ENCODE measurements at regions of chr2 and their contacts with region 1.

Region 1: GRCh38 chr2:84713441-84713840 is 167.4 kb downstream of the TRABD2A start:
- DNase-seq: no peak
- ATAC-seq: no peak
- H3K4me3 ChIP-seq: no peak overlapping the region
- H3K27ac ChIP-seq: no peak overlapping the region
- H3K4me1 ChIP-seq: no peaks in the 10 kb centered on the region
- H3K27me3 ChIP-seq: no peaks in the 10 kb centered on the region; the same call in 1 of the 2 replicates
- CTCF ChIP-seq: no peak

Region 2: DNA sequence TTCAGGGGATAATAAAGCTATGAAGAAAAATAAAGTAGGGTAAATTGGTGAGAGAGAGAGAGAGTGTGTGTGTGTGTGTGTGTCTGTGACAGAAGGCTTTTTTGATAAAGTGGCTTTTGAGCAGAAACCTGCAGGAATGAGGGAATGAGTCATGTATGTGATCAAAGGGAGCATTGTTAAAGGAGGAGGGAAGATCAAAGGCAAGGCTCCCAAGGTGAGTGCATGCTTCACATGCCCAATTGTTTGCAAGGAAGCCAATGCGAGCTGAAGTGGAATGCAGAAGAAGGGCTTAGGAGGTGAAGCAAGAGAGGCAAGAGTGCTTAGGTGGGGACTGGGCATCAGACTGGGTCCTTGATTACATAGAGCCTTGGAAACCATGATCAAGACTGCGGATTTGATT is 100.4 kb before region 1 on chr2:
- CTCF ChIA-PET with region 1: no interaction called
- POLR2A ChIA-PET with region 1: no interaction called
- in situ Hi-C with region 1: no loop called
- intact Hi-C with region 1: no loop called
- DNase-seq: no peak
- ATAC-seq: no peak
- H3K4me3 ChIP-seq: no peak overlapping the region
- H3K27ac ChIP-seq: no peak overlapping the region
- H3K4me1 ChIP-seq: no peaks in the 10 kb centered on the region
- H3K27me3 ChIP-seq: no peaks in the 10 kb centered on the region
- CTCF ChIP-seq: no peak

Region 3: DNA sequence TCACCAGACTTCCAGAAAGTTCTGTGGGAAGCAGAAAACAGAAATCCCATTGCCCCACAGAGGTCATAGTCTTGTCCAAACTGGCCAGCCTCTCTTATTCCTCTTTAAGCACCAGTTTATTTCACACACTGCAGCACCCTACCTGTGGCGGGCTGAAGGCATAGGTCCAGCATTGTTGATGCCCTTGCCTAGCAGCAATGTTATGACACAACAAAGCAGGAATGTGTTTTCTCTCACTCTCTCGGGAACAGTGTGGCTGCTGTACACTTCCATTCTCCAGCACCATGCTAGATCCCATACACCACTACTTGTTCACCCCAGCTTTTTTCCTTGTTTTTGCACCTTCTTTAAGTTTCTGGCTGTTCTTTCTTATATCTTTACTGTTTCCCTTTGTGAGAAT is 15.5 kb before region 1 on chr2:
- CTCF ChIA-PET with region 1: no interaction called
- POLR2A ChIA-PET with region 1: no interaction called
- in situ Hi-C with region 1: no loop called
- intact Hi-C with region 1: loop called (anchors 1 kb)
- DNase-seq: no peak
- ATAC-seq: no peak
- H3K4me3 ChIP-seq: no peak overlapping the region
- H3K27ac ChIP-seq: no peak overlapping the region
- H3K4me1 ChIP-seq: no peaks in the 10 kb centered on the region
- H3K27me3 ChIP-seq: peaks cover 4% of the 10 kb centered on the region; the same call in 1 of the 2 replicates
- CTCF ChIP-seq: no peak

Measured in Panc1 (cell line).